H1 (cell line): ENCODE measurements at regions of chr1 and their contacts with region 1.

Region 1: GRCh38 chr1:205061665-205062069 is 18.7 kb downstream of the CNTN2 start:
- DNase-seq: peak; percentile 67 to 99
- H3K4me3 ChIP-seq: no peak overlapping the region
- H3K27ac ChIP-seq: no peak overlapping the region
- H3K4me1 ChIP-seq: peaks cover 0 to 4% (median 2%) of the 10 kb centered on the region in 4 experiments; a peak in 4 of 7 replicates
- H3K27me3 ChIP-seq: no peaks in the 10 kb centered on the region
- CTCF ChIP-seq: peak; percentile 84 to 96 (median 95)
- EP300 ChIP-seq: no peak
- POLR2A ChIP-seq: no peak
- RAD21 ChIP-seq: peak; percentile 94 to 98

Region 2: GRCh38 chr1:204941421-204942338 is 120.0 kb before region 1 on chr1:
- CTCF ChIA-PET with region 1: interaction called, 14 read pairs
- POLR2A ChIA-PET with region 1: no interaction called
- DNase-seq: peak; percentile 53 to 92
- H3K4me3 ChIP-seq: no peak overlapping the region
- H3K27ac ChIP-seq: no peak overlapping the region
- H3K4me1 ChIP-seq: peaks cover 0 to 3% (median 2%) of the 10 kb centered on the region in 4 experiments; a peak in 2 of 7 replicates
- H3K27me3 ChIP-seq: no peaks in the 10 kb centered on the region; a peak in 1 of 7 replicates
- CTCF ChIP-seq: peak; percentile 78 to 94 (median 93)
- EP300 ChIP-seq: no peak
- POLR2A ChIP-seq: no peak
- RAD21 ChIP-seq: peak; percentile 83 to 88

Region 3: DNA sequence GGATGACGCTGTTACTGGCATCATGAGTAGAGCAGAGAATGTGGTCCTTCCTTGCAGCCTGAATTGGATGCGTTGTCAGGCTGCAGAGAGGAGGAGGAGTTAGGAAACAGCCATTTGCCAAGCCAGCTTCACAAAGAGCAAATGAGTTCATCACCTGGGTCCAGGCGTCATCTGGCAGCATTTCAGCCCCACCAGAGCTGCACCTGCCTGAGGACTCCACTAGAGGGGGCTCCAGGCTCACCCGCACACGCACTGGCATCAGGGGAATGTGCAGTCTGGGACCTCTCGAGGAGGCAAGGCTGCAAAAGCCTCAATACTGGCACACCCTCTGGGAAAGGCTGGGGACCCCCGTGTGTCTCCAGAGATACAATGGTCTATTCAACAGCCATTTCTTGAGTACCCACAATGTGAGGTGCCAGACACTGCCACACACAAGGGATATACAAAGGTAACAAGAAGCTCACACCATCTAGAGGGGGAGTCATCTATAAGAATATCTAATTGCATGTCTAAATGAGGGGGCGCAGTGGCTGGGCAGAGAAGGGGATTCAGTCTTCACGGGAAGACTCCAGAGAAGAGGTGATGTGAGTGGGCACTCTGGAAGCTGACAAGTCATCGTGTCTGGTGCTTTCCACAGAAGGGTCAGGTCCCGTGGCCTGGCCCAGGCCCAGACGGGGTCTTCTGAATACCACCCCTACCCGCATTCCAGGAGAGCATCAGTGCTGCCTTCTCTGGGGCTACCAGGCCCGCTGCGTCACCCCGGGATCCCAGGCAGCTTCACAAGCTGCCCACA is 72.2 kb before region 1 on chr1:
- CTCF ChIA-PET with region 1: interaction called, 1,336 read pairs
- POLR2A ChIA-PET with region 1: interaction called, 6 read pairs
- DNase-seq: peak; percentile 70 to 90
- H3K4me3 ChIP-seq: no peak overlapping the region
- H3K27ac ChIP-seq: no peak overlapping the region
- H3K4me1 ChIP-seq: peaks cover 10 to 27% (median 19%) of the 10 kb centered on the region in 4 experiments
- H3K27me3 ChIP-seq: no peaks in the 10 kb centered on the region; a peak in 1 of 7 replicates
- CTCF ChIP-seq: peak; percentile 98 to 100 (median 98)
- EP300 ChIP-seq: no peak
- POLR2A ChIP-seq: no peak
- RAD21 ChIP-seq: peak; percentile 100

Region 4: DNA sequence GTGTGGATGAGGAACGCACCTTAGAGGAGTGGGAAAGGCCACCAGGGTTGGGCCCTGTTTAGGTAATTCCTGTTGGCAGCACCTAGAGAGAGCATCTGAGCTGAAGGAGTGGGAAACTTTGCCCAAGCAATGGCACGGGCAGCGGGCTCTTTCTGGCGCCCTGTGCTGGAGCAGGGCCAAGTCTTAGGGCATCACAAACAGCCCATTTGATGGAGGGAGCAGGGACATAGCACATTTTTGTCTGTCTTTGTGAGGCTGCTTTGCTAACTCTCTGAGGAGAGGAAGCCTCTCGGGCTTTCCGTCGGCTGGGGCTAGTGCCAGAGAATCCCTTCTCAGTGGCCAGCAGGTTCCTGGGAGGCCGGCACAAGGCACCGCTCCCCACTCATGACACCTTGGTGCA is 41.2 kb before region 1 on chr1:
- CTCF ChIA-PET with region 1: interaction called, 33 read pairs
- POLR2A ChIA-PET with region 1: no interaction called
- DNase-seq: no peak
- H3K4me3 ChIP-seq: no peak overlapping the region
- H3K27ac ChIP-seq: no peak overlapping the region
- H3K4me1 ChIP-seq: no peaks in the 10 kb centered on the region
- H3K27me3 ChIP-seq: no peaks in the 10 kb centered on the region; a peak in 1 of 7 replicates
- CTCF ChIP-seq: no peak
- EP300 ChIP-seq: no peak
- POLR2A ChIP-seq: no peak
- RAD21 ChIP-seq: no peak

Region 5: GRCh38 chr1:205042911-205043806 is 18.5 kb before region 1 on chr1 and contains the start of gene CNTN2:
- CTCF ChIA-PET with region 1: interaction called, 102 read pairs
- POLR2A ChIA-PET with region 1: interaction called, 3 read pairs
- DNase-seq: peak in 1 of 2 experiments; percentile 75
- H3K4me3 ChIP-seq: peak within 1 kb of the TSS; percentile 1 to 56 (median 34); a peak in 5 of 8 replicates
- H3K27ac ChIP-seq: no peak within 1 kb of the TSS
- H3K4me1 ChIP-seq: peaks cover 13 to 27% (median 16%) of the 10 kb centered on the region in 4 experiments
- H3K27me3 ChIP-seq: peaks cover 0 to 32% (median 18%) of the 10 kb centered on the region in 4 experiments; a peak in 5 of 7 replicates
- CTCF ChIP-seq: no peak
- EP300 ChIP-seq: no peak
- POLR2A ChIP-seq: no peak
- RAD21 ChIP-seq: no peak
- total RNA-seq, gene CNTN2: 3.9 TPM in 2 replicates

Region 6: GRCh38 chr1:205077158-205077933 is 15.7 kb after region 1 on chr1:
- CTCF ChIA-PET with region 1: interaction called, 113 read pairs
- POLR2A ChIA-PET with region 1: interaction called, 3 read pairs
- DNase-seq: no peak
- H3K4me3 ChIP-seq: no peak overlapping the region
- H3K27ac ChIP-seq: no peak overlapping the region
- H3K4me1 ChIP-seq: no peaks in the 10 kb centered on the region
- H3K27me3 ChIP-seq: no peaks in the 10 kb centered on the region
- CTCF ChIP-seq: no peak
- EP300 ChIP-seq: no peak
- POLR2A ChIP-seq: no peak
- RAD21 ChIP-seq: no peak

Region 7: GRCh38 chr1:205088341-205088740 is 26.7 kb after region 1 on chr1:
- CTCF ChIA-PET with region 1: interaction called, 12 read pairs
- POLR2A ChIA-PET with region 1: no interaction called
- DNase-seq: no peak
- H3K4me3 ChIP-seq: no peak overlapping the region
- H3K27ac ChIP-seq: no peak overlapping the region
- H3K4me1 ChIP-seq: no peaks in the 10 kb centered on the region
- H3K27me3 ChIP-seq: no peaks in the 10 kb centered on the region
- CTCF ChIP-seq: no peak
- EP300 ChIP-seq: no peak
- POLR2A ChIP-seq: no peak
- RAD21 ChIP-seq: no peak

Region 8: DNA sequence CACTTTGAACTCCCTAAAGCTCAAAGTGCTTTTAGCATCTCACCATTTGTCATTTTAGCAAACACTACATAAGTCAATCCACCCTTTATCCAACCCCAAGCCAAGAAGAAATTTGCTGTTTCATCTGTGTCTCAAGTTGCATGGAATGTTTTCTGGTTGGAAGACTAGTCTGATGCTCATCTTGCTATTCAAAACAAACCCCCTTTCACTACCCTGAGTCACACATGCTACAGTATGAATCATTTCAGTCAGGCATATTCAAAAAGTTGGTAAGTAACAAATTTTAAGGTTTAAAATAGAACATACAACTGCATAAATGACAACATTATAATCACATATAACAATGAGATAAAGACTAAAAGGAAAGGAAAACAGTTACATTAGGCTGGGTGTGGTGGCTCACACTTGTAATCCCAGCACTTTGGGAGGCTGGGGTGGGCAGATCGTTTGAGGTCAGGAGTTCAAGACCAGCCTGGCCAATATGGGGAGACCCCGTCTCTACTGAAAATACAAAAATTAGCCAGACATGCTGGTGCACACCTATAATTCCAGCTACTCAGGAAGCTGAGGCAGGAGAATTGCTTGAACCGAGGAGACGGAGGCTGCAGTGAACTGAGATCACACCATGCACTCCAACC is 111.2 kb after region 1 on chr1:
- CTCF ChIA-PET with region 1: no interaction called
- POLR2A ChIA-PET with region 1: no interaction called
- DNase-seq: no peak
- H3K4me3 ChIP-seq: no peak overlapping the region
- H3K27ac ChIP-seq: no peak overlapping the region
- H3K4me1 ChIP-seq: no peaks in the 10 kb centered on the region
- H3K27me3 ChIP-seq: no peaks in the 10 kb centered on the region
- CTCF ChIP-seq: no peak
- EP300 ChIP-seq: no peak
- POLR2A ChIP-seq: no peak
- RAD21 ChIP-seq: no peak